Activated naive CD4-positive, alpha-beta T cell treated with anti-CD3 and anti-CD28 coated beads for 36 hours (primary cell): ENCODE measurements at regions of chr20 and their contacts with region 1.

Region 1: GRCh38 chr20:63223221-63224207 is 7.6 kb upstream of the YTHDF1 start:
- DNase-seq: peak; percentile 63
- H3K4me3 Mint-ChIP-seq: no peak overlapping the region
- H3K27ac Mint-ChIP-seq: no peak overlapping the region
- H3K4me1 Mint-ChIP-seq: no peaks in the 10 kb centered on the region
- H3K27me3 Mint-ChIP-seq: no peaks in the 10 kb centered on the region

Region 2: DNA sequence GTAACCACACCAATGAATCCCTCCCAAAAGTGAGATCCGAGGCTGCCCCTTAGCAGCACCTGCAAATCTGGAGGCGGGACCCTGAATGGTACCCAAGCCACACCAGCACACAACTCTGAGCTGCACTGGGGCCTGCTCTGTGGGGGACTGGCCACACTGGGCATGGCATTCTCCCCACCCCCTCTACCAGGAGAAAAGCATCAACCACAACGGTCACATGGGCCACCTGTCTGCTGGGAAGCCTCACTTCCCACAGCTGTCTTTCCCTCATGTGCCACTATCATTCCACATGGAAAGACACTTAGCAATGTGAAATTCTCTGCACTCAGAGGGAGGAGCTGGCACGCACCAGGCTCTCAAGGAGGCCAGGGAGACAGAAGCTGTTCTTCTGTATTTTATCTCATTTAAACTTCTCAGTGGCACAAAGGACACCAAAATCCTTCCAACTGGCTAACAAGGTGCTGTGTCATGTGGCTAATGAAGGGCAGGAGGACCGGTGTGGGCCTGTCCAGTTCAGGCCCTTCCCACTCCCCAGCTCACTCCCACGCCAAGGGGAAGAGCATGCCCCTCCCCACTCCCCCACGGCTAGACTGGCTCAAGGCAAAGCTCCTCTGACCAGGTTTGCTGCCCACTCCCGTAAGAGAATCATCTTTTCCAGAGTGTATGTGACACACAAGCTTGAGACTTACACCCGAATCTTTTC is 26.6 kb before region 1 on chr20:
- CTCF ChIA-PET with region 1: interaction called, 32 read pairs
- intact Hi-C with region 1: no loop called
- DNase-seq: no peak
- H3K4me3 Mint-ChIP-seq: no peak overlapping the region
- H3K27ac Mint-ChIP-seq: no peak overlapping the region
- H3K4me1 Mint-ChIP-seq: peaks cover 39% of the 10 kb centered on the region
- H3K27me3 Mint-ChIP-seq: no peaks in the 10 kb centered on the region

Region 3: DNA sequence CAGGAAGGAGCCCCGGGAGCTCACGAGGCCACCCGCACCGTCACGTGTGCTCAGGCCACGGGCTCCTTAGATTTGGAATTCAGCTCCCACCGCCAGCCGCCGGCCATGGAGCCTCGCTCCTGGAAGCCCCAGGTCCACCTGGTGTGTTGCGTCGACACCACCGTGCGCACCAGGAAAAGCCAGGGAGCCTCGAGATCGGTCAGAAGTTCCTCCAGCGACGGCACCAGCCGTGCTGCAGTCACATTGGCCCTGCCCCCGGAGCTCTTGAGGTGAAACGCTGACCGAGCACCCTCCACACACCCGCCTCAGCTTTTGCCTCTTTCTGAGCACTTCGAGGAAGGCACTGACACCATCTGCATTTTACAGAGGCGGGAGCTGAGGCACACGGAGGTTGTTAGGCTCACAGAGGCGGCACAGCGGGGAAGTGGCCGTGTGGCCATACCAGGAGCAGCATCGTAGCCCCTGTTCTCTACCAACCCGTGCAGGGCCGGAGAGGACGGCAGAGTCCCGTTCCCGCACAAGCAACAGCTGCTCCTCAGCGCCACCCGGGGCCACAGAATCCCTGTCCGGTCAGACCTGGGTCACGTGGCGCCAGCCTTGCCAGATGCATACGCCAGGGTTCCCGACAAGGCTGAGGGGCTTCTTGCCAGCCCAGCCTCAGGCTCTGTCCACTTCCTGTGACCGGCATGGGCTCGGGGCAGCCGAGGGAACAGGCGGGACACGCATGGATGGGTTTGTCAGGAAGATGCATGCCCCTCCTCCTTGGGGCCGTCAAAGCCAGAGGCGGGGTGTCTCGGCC is 23.2 kb after region 1 on chr20:
- CTCF ChIA-PET with region 1: interaction called, 11 read pairs
- intact Hi-C with region 1: loop called (anchors 1 kb)
- DNase-seq: no peak
- H3K4me3 Mint-ChIP-seq: no peak overlapping the region
- H3K27ac Mint-ChIP-seq: no peak overlapping the region
- H3K4me1 Mint-ChIP-seq: no peaks in the 10 kb centered on the region
- H3K27me3 Mint-ChIP-seq: peaks cover 11% of the 10 kb centered on the region

Region 4: DNA sequence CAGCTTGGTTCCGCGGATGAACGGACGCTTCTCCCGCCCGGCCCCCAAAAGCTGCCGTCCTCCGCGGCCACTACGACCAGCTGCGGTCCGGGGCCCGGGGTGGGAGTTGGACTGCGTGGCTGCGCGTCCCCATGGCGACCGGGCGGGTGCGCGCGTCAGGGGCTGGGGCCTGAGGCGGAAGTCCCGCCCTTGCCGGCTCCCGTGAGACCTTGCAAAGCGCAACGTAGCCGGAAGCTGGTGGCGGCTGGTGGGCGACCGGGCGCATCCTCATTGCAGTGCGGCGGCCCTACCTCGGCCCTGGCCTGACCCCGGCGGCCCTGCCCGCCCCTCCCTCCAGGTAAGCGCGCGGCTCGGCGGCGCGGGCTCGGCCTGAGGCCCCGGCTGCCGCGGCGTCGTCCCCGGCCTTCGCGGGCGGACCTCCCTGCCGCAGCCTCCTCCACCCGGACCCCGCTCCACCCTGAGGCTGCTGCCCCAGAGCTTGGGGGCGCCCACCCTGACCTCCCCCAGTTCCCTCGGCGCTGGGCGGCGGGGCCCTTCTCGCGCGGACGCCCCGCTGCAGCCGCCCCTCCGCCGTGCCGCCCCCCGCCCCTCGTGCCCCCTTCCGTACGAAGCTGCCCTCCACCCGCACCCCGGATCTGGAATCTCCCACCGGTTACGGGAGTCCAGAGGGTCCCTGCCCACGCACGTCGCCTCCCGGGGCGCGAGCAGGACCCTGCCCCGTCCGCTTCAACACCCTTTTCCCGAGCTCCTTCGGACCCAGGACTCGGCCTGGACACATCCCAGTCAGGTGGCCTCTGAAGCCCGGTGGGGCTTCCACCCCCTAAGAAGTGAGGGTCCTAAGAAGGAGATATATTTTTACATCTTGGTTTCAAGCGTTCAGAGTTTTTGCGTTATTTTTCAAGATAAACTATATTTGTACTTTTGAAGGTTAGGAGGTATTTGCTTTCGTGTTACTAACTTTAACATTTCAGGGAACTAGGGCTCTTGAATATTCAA is 49.4 kb after region 1 on chr20 and contains the start of gene ARFGAP1:
- CTCF ChIA-PET with region 1: interaction called, 16 read pairs
- intact Hi-C with region 1: no loop called
- DNase-seq: peak; percentile 91
- H3K4me3 Mint-ChIP-seq: peak within 1 kb of the TSS; percentile 86
- H3K27ac Mint-ChIP-seq: peak within 1 kb of the TSS; percentile 78
- H3K4me1 Mint-ChIP-seq: peaks cover 26% of the 10 kb centered on the region
- H3K27me3 Mint-ChIP-seq: no peaks in the 10 kb centered on the region
- total RNA-seq, gene ARFGAP1: 82.4 to 89.4 TPM

Region 5: DNA sequence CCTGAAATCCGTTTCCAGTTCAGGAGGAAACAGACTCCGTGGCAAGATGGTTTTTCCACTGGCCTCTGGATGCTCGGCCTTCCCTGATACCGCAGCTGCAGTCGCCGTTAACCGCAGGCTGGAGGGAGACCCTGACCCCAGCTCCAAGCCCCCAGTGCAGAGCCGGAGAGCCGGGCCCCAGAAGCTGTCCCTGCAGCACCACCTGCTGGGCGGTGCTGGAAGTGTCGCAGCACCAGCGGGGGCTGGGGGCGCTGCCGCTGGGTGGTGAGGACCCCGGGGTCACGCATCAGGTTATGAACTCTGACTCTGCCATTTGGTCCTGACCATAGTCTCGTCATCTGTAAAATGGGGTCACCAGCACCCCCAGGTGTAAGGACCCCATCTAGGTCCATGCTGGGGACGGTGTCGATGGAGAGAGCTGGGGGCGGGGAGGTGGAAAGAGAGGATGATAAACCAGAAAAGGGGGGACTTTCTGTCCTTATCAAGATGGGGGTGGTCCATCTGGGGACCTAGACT is 158.4 kb after region 1 on chr20:
- CTCF ChIA-PET with region 1: interaction called, 54 read pairs
- intact Hi-C with region 1: loop called (anchors 1 kb)
- DNase-seq: peak; percentile 29
- H3K4me3 Mint-ChIP-seq: no peak overlapping the region
- H3K27ac Mint-ChIP-seq: no peak overlapping the region
- H3K4me1 Mint-ChIP-seq: no peaks in the 10 kb centered on the region
- H3K27me3 Mint-ChIP-seq: peaks cover 19% of the 10 kb centered on the region